Mammary epithelial cell (primary cell): ENCODE measurements at regions of chr15 and their contacts with region 1.

Region 1: DNA sequence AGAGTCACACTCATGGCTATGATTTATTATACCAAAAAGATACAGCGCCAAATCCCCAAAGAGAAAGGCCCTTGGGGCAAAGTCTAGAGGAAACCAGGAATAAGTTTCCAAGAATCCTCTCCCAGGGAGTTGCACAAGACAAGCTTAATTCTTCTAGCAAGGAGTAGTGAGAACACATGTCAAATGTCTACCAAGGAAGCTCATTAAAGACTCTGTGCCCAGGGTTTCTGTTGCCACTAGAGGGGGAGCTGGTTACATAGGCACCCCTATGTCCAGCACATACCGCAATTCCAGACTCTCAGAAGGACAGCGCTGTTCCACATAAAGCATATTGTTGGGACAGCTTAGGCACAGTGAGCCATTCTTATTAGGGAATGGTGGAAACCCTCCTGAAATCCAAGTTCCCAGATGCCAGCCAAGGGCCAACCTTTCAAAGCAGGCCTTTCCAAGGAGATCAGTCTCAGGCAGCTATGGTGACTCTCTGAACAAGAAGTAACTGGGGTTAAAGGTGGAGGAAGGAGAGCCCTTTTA is 194.2 kb downstream of the UACA start:
- DNase-seq: peak; percentile 54
- H3K4me3 ChIP-seq: no peak overlapping the region
- H3K27ac ChIP-seq: no peak overlapping the region
- H3K4me1 ChIP-seq: peaks cover 13% of the 10 kb centered on the region
- H3K27me3 ChIP-seq: no peaks in the 10 kb centered on the region
- CTCF ChIP-seq: peak; percentile 48 to 68

Region 2: GRCh38 chr15:70636540-70637165 is 67.5 kb after region 1 on chr15:
- CTCF ChIA-PET with region 1: interaction called, 3 read pairs
- dilution Hi-C with region 1: no loop called
- in situ Hi-C with region 1: no loop called
- intact Hi-C with region 1: loop called (anchors 1 kb)
- DNase-seq: peak; percentile 24
- H3K4me3 ChIP-seq: no peak overlapping the region
- H3K27ac ChIP-seq: no peak overlapping the region
- H3K4me1 ChIP-seq: no peaks in the 10 kb centered on the region
- H3K27me3 ChIP-seq: no peaks in the 10 kb centered on the region
- CTCF ChIP-seq: peak; percentile 25 to 47